ENCODE measurements at regions of chr5 and their contacts with region 1.

Region 1: DNA sequence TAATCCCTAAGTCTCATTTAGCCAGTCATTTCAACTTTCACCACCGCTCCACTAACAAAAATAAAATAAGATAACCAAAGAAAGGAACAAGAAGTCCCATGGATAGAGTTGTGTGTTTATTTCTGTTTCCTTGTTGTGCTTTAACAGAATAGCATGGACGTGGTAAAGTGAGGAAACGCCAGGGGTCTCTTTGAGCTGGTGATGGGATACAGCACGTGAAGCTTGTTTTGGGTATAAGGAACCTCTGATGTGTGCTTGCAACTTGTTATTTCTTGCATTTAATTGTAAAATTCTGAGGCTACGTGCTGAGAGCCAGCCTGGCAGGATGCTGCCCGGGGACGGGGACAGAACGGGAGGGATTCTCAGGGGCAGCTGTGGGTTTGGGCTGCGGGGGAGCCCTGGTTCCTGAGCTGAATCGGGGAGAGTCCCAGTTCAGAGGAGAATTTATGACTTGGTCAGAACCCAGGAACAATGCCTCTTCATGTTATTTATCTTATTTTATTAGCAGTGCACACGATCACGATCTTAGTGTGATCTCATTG is 63.4 kb downstream of the ANKRD33B start:
- DNase-seq: no peak
- ATAC-seq: peak; percentile 12
- H3K4me3 ChIP-seq: peak overlapping the region; percentile 29
- H3K27ac ChIP-seq: peak overlapping the region; percentile 64
- H3K4me1 ChIP-seq: peaks cover 62% of the 10 kb centered on the region
- H3K27me3 ChIP-seq: no peaks in the 10 kb centered on the region
- CTCF ChIP-seq: no peak
- EP300 ChIP-seq: no peak
- POLR2A ChIP-seq: no peak
- RAD21 ChIP-seq: no peak

Region 2: GRCh38 chr5:10441083-10441991 is 185.9 kb before region 1 on chr5 and contains the start of gene ROPN1L:
- CTCF ChIA-PET with region 1: interaction called, 21 read pairs
- POLR2A ChIA-PET with region 1: no interaction called
- RAD21 ChIA-PET with region 1: interaction called, 5 read pairs
- SMC1A ChIA-PET with region 1: interaction called, 17 read pairs
- in situ Hi-C with region 1: no loop called
- intact Hi-C with region 1: no loop called
- DNase-seq: peak; percentile 49
- ATAC-seq: peak; percentile 98
- H3K4me3 ChIP-seq: peak within 1 kb of the TSS; percentile 64
- H3K27ac ChIP-seq: no peak within 1 kb of the TSS
- H3K4me1 ChIP-seq: peaks cover 10% of the 10 kb centered on the region
- H3K27me3 ChIP-seq: peaks cover 0 to 6% of the 10 kb centered on the region in 2 experiments; a peak in 2 of 4 replicates
- CTCF ChIP-seq: no peak
- EP300 ChIP-seq: no peak
- POLR2A ChIP-seq: peak; percentile 58; the same call in 1 of the 2 replicates
- RAD21 ChIP-seq: no peak
- polyA plus RNA-seq, gene ROPN1L: not detected

Region 3: GRCh38 chr5:10552183-10553143 is 74.8 kb before region 1 on chr5:
- CTCF ChIA-PET with region 1: interaction called, 57 read pairs
- POLR2A ChIA-PET with region 1: interaction called, 3 read pairs
- RAD21 ChIA-PET with region 1: interaction called, 9 read pairs
- SMC1A ChIA-PET with region 1: interaction called, 18 read pairs
- in situ Hi-C with region 1: no loop called
- intact Hi-C with region 1: no loop called
- DNase-seq: no peak
- ATAC-seq: peak; percentile 78
- H3K4me3 ChIP-seq: no peak overlapping the region
- H3K27ac ChIP-seq: no peak overlapping the region
- H3K4me1 ChIP-seq: peaks cover 19% of the 10 kb centered on the region
- H3K27me3 ChIP-seq: no peaks in the 10 kb centered on the region
- CTCF ChIP-seq: no peak
- EP300 ChIP-seq: no peak
- POLR2A ChIP-seq: peak; percentile 53; the same call in 1 of the 2 replicates
- RAD21 ChIP-seq: no peak

Region 4: DNA sequence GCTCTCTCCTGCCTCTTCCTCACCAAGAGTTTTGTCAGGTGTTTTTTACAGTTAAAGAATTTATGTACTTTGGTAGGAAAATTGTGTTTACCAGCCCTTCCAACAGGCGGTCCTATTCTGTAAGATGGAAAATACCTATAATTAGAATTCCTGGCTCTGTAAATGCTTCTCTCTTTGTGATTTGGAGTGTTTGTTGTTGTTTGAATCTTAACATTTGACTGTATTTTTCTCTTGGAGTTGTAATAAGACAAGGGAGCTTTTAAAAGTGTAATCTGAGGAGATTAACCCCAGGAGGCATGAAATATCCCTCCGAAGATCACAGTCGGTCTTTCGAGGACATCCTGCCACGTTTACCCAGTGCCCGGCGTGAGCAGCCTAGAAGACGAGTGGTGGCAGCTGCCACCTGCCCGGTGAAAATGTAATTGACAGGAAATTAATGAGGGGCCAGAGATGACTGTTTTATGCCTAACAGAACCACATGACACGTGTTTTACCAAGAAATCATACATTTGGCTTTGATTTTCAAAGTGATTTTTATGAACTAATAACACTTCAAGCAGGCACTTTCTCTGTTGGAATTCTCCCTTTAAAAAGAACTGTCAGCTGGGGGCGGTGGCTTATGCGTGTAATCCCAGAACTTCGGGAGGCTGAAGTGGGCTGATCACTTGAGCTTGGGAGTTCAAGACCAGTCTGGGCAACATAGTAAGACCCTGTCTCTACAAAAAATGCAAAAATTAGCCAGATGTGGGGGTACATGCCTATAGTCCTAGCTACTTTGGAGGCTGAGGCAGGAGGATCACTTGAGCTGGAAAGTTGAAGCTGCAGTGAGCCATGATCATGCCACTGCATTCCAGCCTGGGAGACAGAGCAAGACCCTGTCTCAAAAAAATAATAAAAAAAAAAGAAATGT is 43.3 kb before region 1 on chr5:
- CTCF ChIA-PET with region 1: interaction called, 83 read pairs
- POLR2A ChIA-PET with region 1: interaction called, 3 read pairs
- RAD21 ChIA-PET with region 1: interaction called, 15 read pairs
- SMC1A ChIA-PET with region 1: interaction called, 51 read pairs
- in situ Hi-C with region 1: no loop called
- intact Hi-C with region 1: no loop called
- DNase-seq: no peak
- ATAC-seq: no peak
- H3K4me3 ChIP-seq: no peak overlapping the region
- H3K27ac ChIP-seq: peak overlapping the region; percentile 20; the same call in 1 of the 2 replicates
- H3K4me1 ChIP-seq: peaks cover 88% of the 10 kb centered on the region
- H3K27me3 ChIP-seq: no peaks in the 10 kb centered on the region
- CTCF ChIP-seq: no peak
- EP300 ChIP-seq: no peak
- POLR2A ChIP-seq: no peak
- RAD21 ChIP-seq: no peak

Region 5: GRCh38 chr5:10655161-10655971 is 28.1 kb after region 1 on chr5:
- CTCF ChIA-PET with region 1: interaction called, 12 read pairs
- POLR2A ChIA-PET with region 1: no interaction called
- RAD21 ChIA-PET with region 1: no interaction called
- SMC1A ChIA-PET with region 1: interaction called, 5 read pairs
- in situ Hi-C with region 1: no loop called
- intact Hi-C with region 1: no loop called
- DNase-seq: no peak
- ATAC-seq: peak; percentile 87
- H3K4me3 ChIP-seq: no peak overlapping the region
- H3K27ac ChIP-seq: peak overlapping the region; percentile 4; the same call in 1 of the 2 replicates
- H3K4me1 ChIP-seq: no peaks in the 10 kb centered on the region; the same call in 1 of the 2 replicates
- H3K27me3 ChIP-seq: no peaks in the 10 kb centered on the region
- CTCF ChIP-seq: no peak
- EP300 ChIP-seq: no peak
- POLR2A ChIP-seq: no peak; the same call in 1 of the 2 replicates
- RAD21 ChIP-seq: no peak

Region 6: GRCh38 chr5:10933121-10933520 is 305.9 kb after region 1 on chr5:
- CTCF ChIA-PET with region 1: no interaction called
- POLR2A ChIA-PET with region 1: no interaction called
- RAD21 ChIA-PET with region 1: no interaction called
- SMC1A ChIA-PET with region 1: no interaction called
- in situ Hi-C with region 1: no loop called
- intact Hi-C with region 1: no loop called
- DNase-seq: no peak
- ATAC-seq: no peak
- H3K4me3 ChIP-seq: no peak overlapping the region
- H3K27ac ChIP-seq: no peak overlapping the region
- H3K4me1 ChIP-seq: no peaks in the 10 kb centered on the region
- H3K27me3 ChIP-seq: no peaks in the 10 kb centered on the region
- CTCF ChIP-seq: no peak
- EP300 ChIP-seq: no peak
- POLR2A ChIP-seq: no peak
- RAD21 ChIP-seq: no peak